ENCODE measurements at regions of chr10 and their contacts with region 1.

Region 1: GRCh38 chr10:111516144-111516543 is 439.3 kb downstream of the ADRA2A start:
- DNase-seq: no peak
- H3K4me3 ChIP-seq: no peak overlapping the region
- H3K27ac ChIP-seq: no peak overlapping the region
- H3K4me1 ChIP-seq: no peaks in the 10 kb centered on the region
- H3K27me3 ChIP-seq: no peaks in the 10 kb centered on the region
- CTCF ChIP-seq: no peak

Region 2: GRCh38 chr10:111473361-111473760 is 42.8 kb before region 1 on chr10:
- CTCF ChIA-PET with region 1: no interaction called
- dilution Hi-C with region 1: loop called (anchors 5 kb)
- in situ Hi-C with region 1: no loop called
- intact Hi-C with region 1: no loop called
- DNase-seq: peak; percentile 91
- H3K4me3 ChIP-seq: no peak overlapping the region
- H3K27ac ChIP-seq: no peak overlapping the region
- H3K4me1 ChIP-seq: peaks cover 28% of the 10 kb centered on the region
- H3K27me3 ChIP-seq: no peaks in the 10 kb centered on the region
- CTCF ChIP-seq: no peak